ENCODE measurements at regions of chr15 and their contacts with region 1.

Region 1: DNA sequence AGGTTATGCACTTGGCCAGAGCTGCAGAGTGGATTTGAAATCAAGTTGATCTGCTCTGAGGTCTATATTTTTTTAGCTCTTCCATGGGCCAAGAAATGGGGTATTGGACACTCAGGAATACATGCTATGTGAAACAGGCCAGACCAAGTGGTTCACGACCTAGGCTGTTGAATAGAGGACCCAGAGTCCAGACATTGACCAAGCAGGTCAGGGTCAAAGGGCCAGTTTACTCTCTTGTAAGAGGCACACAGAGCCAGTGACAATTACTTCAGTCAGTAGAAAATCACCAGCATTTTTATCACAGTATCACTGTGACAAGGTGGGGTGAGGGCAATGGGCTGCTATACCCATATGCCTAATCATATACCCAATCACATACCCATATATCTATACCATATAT is 320.6 kb upstream of the RORA start:
- H3K4me3 ChIP-seq: no peak overlapping the region
- H3K27ac ChIP-seq: no peak overlapping the region
- H3K4me1 ChIP-seq: no peaks in the 10 kb centered on the region
- CTCF ChIP-seq: no peak

Region 2: DNA sequence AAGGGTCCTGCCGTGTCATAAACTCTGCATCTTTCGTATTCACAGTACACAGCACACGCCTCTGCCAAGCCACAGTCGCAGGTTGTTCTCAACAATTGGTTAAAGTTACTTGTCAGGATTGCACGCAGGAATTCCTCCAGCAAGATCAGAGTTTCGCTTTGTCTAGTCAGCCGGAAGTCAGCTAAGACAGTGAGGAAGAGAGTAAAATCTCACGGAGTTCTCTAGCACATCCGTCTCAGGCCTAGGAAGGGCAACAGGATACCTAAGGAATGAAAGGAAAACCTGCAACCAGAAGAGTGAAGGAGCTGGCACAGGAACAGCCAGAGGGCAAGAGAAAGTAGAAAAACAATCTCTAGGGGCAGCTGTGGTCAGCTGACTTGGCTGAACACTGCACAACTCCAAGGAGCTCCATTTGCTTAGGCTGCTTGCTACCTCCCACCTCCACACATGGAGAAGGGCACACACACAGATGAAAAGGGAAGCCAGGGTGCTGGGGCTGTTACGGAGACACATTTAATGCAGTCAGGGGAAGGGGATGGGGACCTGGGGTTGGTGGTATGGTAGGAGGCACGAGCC is 344.3 kb before region 1 on chr15:
- CTCF ChIA-PET with region 1: interaction called, 10 read pairs
- POLR2A ChIA-PET with region 1: no interaction called
- H3K4me3 ChIP-seq: no peak overlapping the region
- H3K27ac ChIP-seq: no peak overlapping the region
- H3K4me1 ChIP-seq: 0 out of 2 replicates have a peak, but pooled peaks cover 3% of the 10 kb centered on the region
- CTCF ChIP-seq: no peak

Region 3: DNA sequence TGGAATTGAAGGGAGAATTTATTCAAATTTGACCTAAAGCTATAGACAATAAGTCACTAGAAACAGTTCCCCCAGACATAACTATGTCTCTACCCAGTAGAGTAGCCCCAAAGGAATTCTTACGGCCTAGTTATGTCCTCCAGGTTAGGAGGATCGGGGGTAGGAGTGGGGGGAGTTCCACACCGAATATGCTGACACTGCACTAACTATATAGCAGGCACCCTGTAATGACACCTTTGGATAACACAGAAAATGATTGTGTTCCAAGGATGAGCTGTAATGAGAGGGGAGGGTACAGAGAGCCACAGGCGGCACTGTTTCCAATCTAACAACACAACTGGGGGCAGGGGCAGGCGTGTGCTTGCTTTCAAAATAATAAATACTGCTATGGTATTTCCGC is 55.6 kb after region 1 on chr15:
- CTCF ChIA-PET with region 1: no interaction called
- POLR2A ChIA-PET with region 1: no interaction called
- H3K4me3 ChIP-seq: no peak overlapping the region
- H3K27ac ChIP-seq: no peak overlapping the region
- H3K4me1 ChIP-seq: no peaks in the 10 kb centered on the region
- CTCF ChIP-seq: no peak

Region 4: GRCh38 chr15:61796056-61796455 is 246.3 kb after region 1 on chr15:
- CTCF ChIA-PET with region 1: no interaction called
- POLR2A ChIA-PET with region 1: no interaction called
- H3K4me3 ChIP-seq: no peak overlapping the region
- H3K27ac ChIP-seq: no peak overlapping the region
- H3K4me1 ChIP-seq: no peaks in the 10 kb centered on the region
- CTCF ChIP-seq: no peak

Measured in HEK293 (cell line).